Calu3 (cell line): ENCODE measurements at regions of chr20 and their contacts with region 1.

Region 1: DNA sequence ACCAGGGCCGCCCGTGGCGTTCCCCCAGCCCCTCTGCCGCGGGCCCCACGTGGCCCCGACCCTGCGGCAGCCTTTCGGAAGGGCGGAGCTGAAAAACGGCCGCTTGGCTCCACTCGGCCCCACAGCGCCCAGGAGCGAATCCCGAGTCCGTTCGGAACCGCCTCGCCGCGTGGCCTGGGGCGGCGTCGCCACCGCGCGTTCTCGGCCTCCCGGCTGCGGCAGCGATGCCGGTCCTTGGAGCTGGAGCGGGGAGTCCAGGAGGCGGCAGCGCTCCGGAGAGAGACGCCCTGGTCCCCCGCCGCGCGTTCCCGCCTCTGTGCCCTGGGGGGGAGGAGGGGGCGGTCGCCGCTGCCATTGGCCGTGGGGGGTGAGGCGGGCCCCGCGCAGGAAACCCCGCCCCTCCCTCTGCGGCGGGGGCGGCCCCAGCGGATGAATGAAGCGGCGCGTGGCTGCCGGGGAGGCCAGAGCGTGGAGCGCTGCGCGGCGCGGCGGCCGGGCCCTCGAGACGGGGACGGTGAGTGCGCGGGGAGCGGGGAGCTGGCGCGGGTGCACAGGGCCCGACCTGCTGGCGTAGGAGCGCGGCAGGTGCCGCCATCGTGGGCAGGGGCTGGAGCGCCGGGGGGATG is at the start of gene SLCO4A1:
- DNase-seq: peak; percentile 95
- H3K4me3 Mint-ChIP-seq: peak within 1 kb of the TSS; percentile 92
- H3K27ac Mint-ChIP-seq: peak within 1 kb of the TSS; percentile 30
- H3K4me1 Mint-ChIP-seq: peaks cover 21% of the 10 kb centered on the region
- H3K27me3 Mint-ChIP-seq: peaks cover 28% of the 10 kb centered on the region
- CTCF ChIP-seq: no peak
- total RNA-seq, gene SLCO4A1: 51.9 and 63.9 TPM in 2 replicates

Region 2: GRCh38 chr20:62623488-62624324 is 18.4 kb before region 1 on chr20:
- CTCF ChIA-PET with region 1: interaction called, 13 read pairs
- intact Hi-C with region 1: no loop called
- DNase-seq: peak; percentile 98
- H3K4me3 Mint-ChIP-seq: peak overlapping the region; percentile 44
- H3K27ac Mint-ChIP-seq: peak overlapping the region; percentile 86
- H3K4me1 Mint-ChIP-seq: peaks cover 37% of the 10 kb centered on the region
- H3K27me3 Mint-ChIP-seq: no peaks in the 10 kb centered on the region
- CTCF ChIP-seq: no peak